Activated CD4-positive, alpha-beta T cell treated with anti-CD3 and anti-CD28 coated beads for 36 hours (primary cell): ENCODE measurements at regions of chr15 and their contacts with region 1.

Region 1: GRCh38 chr15:85831415-85832113 is 36.8 kb upstream of the KLHL25 start:
- DNase-seq: peak; percentile 66
- ATAC-seq: peak; percentile 74
- H3K4me3 Mint-ChIP-seq: no peak overlapping the region
- H3K27ac Mint-ChIP-seq: no peak overlapping the region
- H3K4me1 Mint-ChIP-seq: no peaks in the 10 kb centered on the region
- H3K27me3 Mint-ChIP-seq: no peaks in the 10 kb centered on the region

Region 2: DNA sequence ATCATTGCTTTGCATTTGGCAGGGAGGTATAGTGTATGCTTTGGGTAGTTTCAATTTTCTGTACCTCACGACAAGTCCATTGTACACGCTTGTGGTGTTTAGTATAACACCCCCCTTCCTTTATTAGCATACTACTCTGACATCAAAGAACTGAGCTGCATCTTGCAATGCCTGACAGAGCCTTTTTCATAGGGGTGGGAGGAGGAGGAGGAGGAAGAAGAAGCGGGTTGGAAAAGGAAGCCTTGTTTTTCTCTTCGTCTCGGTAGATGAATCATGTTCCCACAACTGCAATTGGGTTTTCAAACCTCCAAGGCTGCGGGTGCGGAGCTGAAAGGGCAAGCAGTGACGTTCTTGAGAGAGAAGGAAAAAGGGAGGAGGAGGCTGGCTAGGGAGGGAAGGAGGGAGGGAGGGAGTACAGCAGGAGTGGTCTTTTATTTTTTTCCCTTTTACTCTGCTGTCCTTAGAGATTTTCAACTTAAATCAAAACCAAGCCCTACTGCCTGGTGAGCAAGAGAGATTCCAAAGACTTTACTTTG is 212.5 kb before region 1 on chr15:
- CTCF ChIA-PET with region 1: no interaction called
- POLR2A ChIA-PET with region 1: no interaction called
- intact Hi-C with region 1: loop called in 1 of 2 experiments (anchors 10 kb)
- DNase-seq: peak; percentile 78
- ATAC-seq: peak; percentile 90
- H3K4me3 Mint-ChIP-seq: no peak overlapping the region
- H3K27ac Mint-ChIP-seq: no peak overlapping the region
- H3K4me1 Mint-ChIP-seq: peaks cover 48% of the 10 kb centered on the region
- H3K27me3 Mint-ChIP-seq: no peaks in the 10 kb centered on the region

Region 3: DNA sequence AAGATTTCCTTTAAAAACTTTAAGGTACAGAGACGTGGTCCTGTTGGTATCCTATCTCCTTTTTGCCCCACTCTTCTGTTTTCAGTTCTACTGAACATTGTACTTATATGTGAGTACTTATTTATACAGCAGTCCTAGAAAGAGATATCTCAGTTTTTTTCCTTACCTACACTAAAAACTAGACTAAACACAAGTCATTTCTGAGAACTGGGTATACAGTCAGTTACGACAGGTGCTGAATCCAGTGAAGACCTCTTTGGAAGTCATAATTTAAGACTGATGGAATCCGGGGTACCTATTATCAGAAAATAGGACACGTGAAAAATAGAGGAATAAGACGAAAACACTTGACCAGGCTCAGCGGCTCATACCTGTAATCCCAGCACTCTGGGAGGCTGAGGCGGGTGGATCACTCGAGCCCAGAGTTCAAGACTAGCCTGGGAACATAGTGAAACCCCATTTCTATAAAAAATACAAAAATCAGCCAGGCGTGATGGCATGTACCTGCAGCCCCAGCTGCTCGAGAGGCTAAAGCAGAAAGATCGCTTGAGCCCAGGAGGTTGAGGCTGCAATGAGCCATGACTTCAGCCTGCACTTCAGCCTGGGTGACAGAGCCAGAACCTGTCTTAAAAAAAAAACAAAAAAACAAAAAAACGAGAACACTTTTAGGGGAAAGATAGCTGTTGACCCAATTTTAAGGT is 113.1 kb before region 1 on chr15:
- CTCF ChIA-PET with region 1: no interaction called
- POLR2A ChIA-PET with region 1: no interaction called
- intact Hi-C with region 1: no loop called
- DNase-seq: no peak
- ATAC-seq: no peak
- H3K4me3 Mint-ChIP-seq: no peak overlapping the region
- H3K27ac Mint-ChIP-seq: peak overlapping the region; percentile 64
- H3K4me1 Mint-ChIP-seq: peaks cover 75% of the 10 kb centered on the region
- H3K27me3 Mint-ChIP-seq: no peaks in the 10 kb centered on the region